Psoas muscle (tissue), 8 donors: ENCODE measurements at regions of chr12 and their contacts with region 1.

Region 1: DNA sequence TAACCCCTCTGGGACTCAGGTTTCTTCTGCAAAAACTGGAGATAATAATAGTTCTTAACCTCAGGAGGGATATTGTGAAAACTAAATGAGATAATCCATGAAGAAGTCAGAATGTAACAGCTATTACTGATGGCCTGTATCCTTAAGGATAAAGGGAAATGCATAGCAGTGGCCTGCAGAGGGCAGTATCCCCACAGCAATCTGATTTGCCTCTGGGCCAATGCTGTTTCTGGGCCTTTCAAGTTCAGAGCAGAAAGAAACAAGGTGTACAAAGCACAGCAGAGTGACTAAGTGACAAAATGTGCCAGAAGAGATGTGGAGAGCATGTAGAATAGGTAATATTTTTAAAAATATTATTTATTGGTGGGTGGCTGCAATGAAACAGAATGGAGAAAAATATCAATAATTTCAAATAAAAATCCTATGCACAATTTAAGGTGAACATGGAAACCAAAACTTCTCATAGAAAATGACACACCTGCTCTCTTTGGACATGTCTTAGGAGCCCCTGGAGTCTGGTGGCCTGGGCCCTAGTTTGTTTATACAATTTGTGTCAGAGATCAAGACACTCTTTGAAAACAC is 90.3 kb downstream of the C12orf75 start:
- DNase-seq: peak; percentile 70 to 84
- ATAC-seq: peak; percentile 89 to 96 (median 93)
- H3K4me3 ChIP-seq: no peak overlapping the region
- H3K27ac ChIP-seq: no peak overlapping the region
- H3K4me1 ChIP-seq: peaks cover 4% of the 10 kb centered on the region
- H3K27me3 ChIP-seq: no peaks in the 10 kb centered on the region
- CTCF ChIP-seq: peak; percentile 93

Region 2: GRCh38 chr12:105705765-105706164 is 285.0 kb after region 1 on chr12:
- intact Hi-C with region 1: loop called (anchors 10 kb)
- DNase-seq: peak in 1 of 2 donors; percentile 29
- ATAC-seq: peak; percentile 47 to 74 (median 60)
- H3K4me3 ChIP-seq: no peak overlapping the region
- H3K27ac ChIP-seq: peak overlapping the region; percentile 79
- H3K4me1 ChIP-seq: peaks cover 23% of the 10 kb centered on the region
- H3K27me3 ChIP-seq: no peaks in the 10 kb centered on the region
- CTCF ChIP-seq: peak; percentile 77

Region 3: GRCh38 chr12:106205208-106206071 is 784.7 kb after region 1 on chr12:
- intact Hi-C with region 1: loop called (anchors 5 kb)
- DNase-seq: peak; percentile 59 to 88
- ATAC-seq: peak; percentile 99 to 100 (median 99)
- H3K4me3 ChIP-seq: no peak overlapping the region
- H3K27ac ChIP-seq: peak overlapping the region; percentile 23
- H3K4me1 ChIP-seq: peaks cover 22% of the 10 kb centered on the region
- H3K27me3 ChIP-seq: no peaks in the 10 kb centered on the region
- CTCF ChIP-seq: peak; percentile 60

Region 4: DNA sequence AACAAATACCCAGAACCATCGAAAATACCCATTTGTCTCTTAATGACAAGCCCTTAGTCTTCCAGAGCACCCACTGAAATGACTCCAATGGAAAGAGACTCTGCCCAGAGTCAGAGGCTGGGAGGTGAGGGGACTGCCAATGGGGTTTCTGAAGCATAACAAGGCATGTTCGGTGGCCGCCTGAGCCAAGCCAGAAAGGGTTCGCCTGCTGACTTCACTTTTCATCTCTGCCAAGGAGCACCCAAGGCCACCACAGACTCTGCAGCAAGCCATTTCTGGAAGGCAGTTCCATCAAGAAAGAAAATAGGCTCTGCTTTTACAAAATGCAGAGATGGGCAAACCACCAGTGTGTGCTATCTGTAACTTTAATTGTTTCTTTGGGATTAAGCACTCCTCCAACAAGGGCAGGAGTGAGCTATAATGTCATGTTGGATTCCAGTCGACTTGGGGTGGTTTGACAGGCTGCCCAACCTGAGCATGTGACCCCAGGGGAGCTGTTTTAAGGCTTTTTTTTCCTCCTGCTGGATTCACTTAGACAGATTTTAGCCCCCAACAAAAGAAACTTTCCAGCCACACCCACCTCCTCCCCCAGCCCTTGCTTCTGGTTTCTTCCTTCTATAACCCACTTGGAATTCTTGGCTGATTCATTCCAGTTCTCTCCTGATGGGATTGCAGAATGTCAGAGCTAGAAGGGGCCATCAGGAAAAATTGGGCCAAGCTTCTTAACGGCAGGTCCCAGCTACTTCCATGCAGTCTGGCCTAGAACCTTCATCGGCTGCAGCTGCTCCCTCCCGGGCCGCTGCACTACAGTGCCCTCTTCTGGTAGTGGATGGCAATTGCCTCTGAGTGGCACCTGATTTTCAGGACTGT is 803.0 kb after region 1 on chr12:
- intact Hi-C with region 1: loop called (anchors 5 kb)
- DNase-seq: peak; percentile 67 to 85
- ATAC-seq: peak; percentile 84 to 86 (median 84)
- H3K4me3 ChIP-seq: no peak overlapping the region
- H3K27ac ChIP-seq: no peak overlapping the region
- H3K4me1 ChIP-seq: peaks cover 8% of the 10 kb centered on the region
- H3K27me3 ChIP-seq: no peaks in the 10 kb centered on the region
- CTCF ChIP-seq: peak; percentile 96

Region 5: DNA sequence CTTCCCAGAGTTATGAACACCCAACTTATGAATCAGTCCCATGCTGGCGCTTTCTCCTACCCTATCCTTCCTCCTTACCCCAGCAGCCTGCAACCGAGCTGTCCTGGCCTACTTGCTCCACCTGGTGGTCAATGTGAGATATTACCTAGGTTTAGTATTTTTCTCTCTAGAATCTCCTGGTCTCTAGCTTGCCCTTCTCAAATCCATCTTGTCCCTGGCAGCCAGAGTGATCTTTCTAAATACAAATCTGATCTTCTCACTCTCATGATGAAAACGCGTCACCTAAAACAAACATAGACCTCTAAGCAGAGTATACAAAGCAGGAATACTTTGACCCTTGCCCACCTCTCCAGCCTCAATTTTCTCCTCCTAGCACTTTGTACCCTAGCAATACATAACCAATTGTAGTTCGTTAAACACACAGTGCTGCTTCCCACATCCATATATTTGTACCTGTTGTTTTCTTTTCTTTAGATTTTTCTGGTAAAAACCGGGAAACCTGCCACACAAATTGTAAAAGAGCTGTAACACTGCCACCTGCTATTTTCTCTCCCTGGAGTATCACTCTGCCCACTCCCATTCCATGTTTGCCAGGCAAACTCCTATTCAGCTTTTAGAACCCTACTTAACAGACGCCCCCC is 861.8 kb after region 1 on chr12:
- intact Hi-C with region 1: loop called in 1 of 2 experiments (anchors 10 kb)
- DNase-seq: peak; percentile 28 to 59
- ATAC-seq: peak; percentile 80 to 86 (median 84)
- H3K4me3 ChIP-seq: no peak overlapping the region
- H3K27ac ChIP-seq: no peak overlapping the region
- H3K4me1 ChIP-seq: peaks cover 4% of the 10 kb centered on the region
- H3K27me3 ChIP-seq: no peaks in the 10 kb centered on the region
- CTCF ChIP-seq: peak; percentile 76